Thyroid gland (tissue), 4 donors: ENCODE measurements at regions of chr17 and their contacts with region 1.

Region 1: DNA sequence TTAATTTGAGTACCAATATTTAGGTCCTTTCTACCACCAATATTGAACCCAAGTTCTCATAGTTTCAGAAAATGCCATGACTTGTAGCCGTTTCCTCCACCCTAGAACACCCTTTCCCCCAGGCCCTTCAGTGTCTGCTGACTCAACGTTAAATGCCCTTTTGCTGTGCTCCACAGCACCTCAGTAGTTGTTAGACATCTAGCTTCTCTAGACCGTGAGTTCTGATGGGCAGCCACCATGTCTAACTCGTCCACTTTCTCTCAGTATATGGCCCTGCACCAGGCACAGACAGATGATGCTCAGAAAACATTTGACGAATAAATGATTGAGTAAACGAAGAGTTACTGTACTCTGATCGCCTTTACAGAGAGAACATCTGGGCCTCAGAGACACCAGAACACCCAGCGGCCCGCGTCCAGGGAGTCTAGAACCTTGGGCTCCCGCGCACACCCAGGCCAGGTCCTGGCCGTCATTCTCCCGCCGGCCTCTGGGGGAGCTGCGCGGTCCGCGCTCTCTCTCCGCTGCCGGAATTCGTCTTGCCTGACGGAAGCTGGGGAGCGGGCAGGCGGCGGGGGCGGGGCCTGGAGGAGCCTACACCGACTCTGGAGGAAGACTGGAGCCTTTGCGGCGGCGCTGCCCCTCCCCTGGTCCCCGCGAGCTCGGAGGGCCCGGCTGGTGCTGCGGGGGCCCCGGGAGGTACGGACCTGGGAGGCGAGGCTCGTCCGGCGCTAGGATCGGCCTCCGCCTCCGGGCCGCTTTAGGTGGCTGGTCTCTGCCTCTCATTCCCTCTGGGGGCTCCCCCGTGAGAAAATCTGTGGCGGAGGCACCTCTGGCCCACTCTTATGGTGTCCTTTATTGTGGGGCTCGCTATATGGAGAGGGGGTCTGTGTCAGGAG is at the start of gene NKIRAS2:
- DNase-seq: peak; percentile 94
- H3K4me3 ChIP-seq: peak within 1 kb of the TSS; percentile 56 to 94 (median 71)
- H3K27ac ChIP-seq: peak within 1 kb of the TSS; percentile 61 to 85 (median 62)
- H3K4me1 ChIP-seq: peaks cover 36 to 43% of the 10 kb centered on the region in 2 donors
- H3K27me3 ChIP-seq: no peaks in the 10 kb centered on the region
- CTCF ChIP-seq: peak; percentile 72 to 97 (median 90)
- POLR2A ChIP-seq: peak in 1 of 2 donors; percentile 61
- total RNA-seq, gene NKIRAS2: 23.6 to 34.6 (median 26.6) TPM

Region 2: GRCh38 chr17:41972571-41973411 is 47.0 kb before region 1 on chr17:
- intact Hi-C with region 1: loop called (anchors 5 kb)
- DNase-seq: no peak
- H3K4me3 ChIP-seq: no peak overlapping the region
- H3K27ac ChIP-seq: no peak overlapping the region
- H3K4me1 ChIP-seq: peaks cover 0 to 30% of the 10 kb centered on the region in 2 donors
- H3K27me3 ChIP-seq: no peaks in the 10 kb centered on the region
- CTCF ChIP-seq: no peak
- POLR2A ChIP-seq: no peak